ENCODE measurements at regions of chr21 and their contacts with region 1.

Region 1: DNA sequence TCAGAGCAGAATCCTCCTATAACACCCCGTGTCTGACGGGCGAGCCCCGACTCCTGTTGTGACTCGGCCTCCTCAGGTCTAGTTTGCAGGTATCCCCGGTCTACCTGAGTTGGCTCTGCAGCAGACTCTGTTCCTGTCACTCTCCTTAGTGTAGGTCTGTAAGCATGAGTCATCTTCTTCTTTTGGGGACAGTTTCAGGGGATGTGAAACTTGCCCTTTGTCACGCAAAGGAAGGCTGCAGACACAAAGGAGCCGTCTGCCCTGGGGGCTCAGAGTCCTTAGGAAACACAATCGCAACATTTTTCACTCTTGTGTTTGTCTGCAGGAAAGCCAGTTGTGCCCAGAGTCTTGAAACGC is 183.2 kb downstream of the RUNX1 start:
- DNase-seq: no peak
- ATAC-seq: peak; percentile 82
- H3K4me3 Mint-ChIP-seq: peak overlapping the region; percentile 73
- H3K27ac Mint-ChIP-seq: peak overlapping the region; percentile 87
- H3K4me1 Mint-ChIP-seq: peaks cover 49% of the 10 kb centered on the region
- H3K27me3 Mint-ChIP-seq: no peaks in the 10 kb centered on the region
- CTCF ChIP-seq: no peak

Region 2: GRCh38 chr21:34807146-34807880 is 58.6 kb before region 1 on chr21:
- CTCF ChIA-PET with region 1: no interaction called
- POLR2A ChIA-PET with region 1: no interaction called
- intact Hi-C with region 1: loop called (anchors 5 kb)
- DNase-seq: no peak
- ATAC-seq: peak; percentile 83
- H3K4me3 Mint-ChIP-seq: no peak overlapping the region
- H3K27ac Mint-ChIP-seq: peak overlapping the region; percentile 71
- H3K4me1 Mint-ChIP-seq: peaks cover 48% of the 10 kb centered on the region
- H3K27me3 Mint-ChIP-seq: no peaks in the 10 kb centered on the region
- CTCF ChIP-seq: no peak

Region 3: GRCh38 chr21:34845521-34846451 is 20.1 kb before region 1 on chr21:
- CTCF ChIA-PET with region 1: no interaction called
- POLR2A ChIA-PET with region 1: interaction called, 13 read pairs
- intact Hi-C with region 1: loop called (anchors 1 kb)
- DNase-seq: no peak
- ATAC-seq: peak; percentile 74
- H3K4me3 Mint-ChIP-seq: peak overlapping the region; percentile 52
- H3K27ac Mint-ChIP-seq: peak overlapping the region; percentile 64
- H3K4me1 Mint-ChIP-seq: peaks cover 36% of the 10 kb centered on the region
- H3K27me3 Mint-ChIP-seq: no peaks in the 10 kb centered on the region
- CTCF ChIP-seq: no peak

Region 4: DNA sequence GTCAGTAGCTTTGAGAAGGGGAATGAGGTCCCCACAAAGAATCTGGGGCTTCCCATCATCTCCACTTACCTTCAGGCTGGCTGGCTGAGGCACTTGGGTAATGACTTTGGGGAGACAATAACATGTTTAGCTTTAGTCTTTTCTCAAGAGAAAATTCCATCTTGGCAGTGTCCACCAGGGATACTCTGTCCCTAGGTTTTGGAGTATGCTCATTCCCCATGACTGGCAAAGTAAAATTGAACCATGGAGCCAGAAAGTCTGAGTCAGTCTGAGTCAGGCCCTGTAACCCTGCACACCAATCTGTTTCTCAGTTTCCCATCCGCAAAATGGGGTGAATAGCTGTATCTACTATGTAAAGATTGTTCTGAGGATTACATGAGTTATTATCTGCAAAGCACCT is 155.0 kb after region 1 on chr21:
- CTCF ChIA-PET with region 1: no interaction called
- POLR2A ChIA-PET with region 1: no interaction called
- intact Hi-C with region 1: loop called (anchors 1 kb)
- DNase-seq: no peak
- ATAC-seq: no peak
- H3K4me3 Mint-ChIP-seq: no peak overlapping the region
- H3K27ac Mint-ChIP-seq: peak overlapping the region; percentile 35
- H3K4me1 Mint-ChIP-seq: peaks cover 47% of the 10 kb centered on the region
- H3K27me3 Mint-ChIP-seq: no peaks in the 10 kb centered on the region
- CTCF ChIP-seq: no peak

Measured in activated B cell treated with CpG ODN at 0.5 μM for 24 hours (primary cell).